Sigmoid colon (tissue), 7 donors: ENCODE measurements at regions of chr1 and their contacts with region 1.

Region 1: DNA sequence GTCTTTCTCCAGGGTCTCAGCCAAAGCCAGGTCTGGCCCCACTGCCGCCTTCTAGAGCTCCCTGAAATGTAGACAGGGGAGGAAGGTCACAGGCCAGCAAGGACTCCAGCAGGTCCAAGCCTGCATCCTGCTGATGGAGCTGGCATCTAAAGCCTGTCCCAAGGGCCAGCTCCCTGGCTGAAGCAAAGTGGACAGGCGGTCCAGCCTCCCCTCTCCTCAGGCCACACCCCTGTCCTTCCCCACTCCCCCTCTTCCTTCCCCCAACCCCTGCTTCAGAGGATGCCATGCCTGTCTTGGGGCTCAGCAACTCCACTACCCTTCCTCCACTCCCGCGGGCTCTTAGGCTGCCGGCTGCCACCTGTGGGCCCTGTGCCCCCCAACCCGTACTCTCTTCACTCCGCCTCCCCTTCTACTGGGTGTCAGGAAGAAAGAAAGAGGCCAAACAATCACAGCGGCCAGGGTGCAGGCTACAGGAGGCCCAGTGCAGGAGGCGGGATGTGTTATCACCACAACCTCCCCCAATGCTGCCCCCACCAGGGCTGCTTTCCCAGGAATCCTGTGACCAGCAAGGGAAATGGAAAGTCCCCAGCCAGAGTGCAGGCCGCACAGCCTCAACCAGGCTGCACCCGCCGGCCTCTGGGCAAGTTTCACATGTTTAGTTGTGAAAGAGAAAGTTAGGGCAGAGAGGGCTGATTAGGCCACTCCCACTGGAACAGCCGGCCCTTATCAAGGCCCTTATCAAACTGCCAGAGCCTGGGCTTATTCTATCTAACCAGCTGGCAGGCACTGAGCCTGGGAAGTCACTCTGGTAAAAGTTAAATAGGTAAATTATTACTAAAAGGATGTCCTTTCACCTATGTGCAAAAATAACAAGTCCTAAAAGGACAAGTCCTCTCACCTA is 34.1 kb downstream of the ACOT7 start:
- DNase-seq: peak; percentile 86
- H3K4me3 ChIP-seq: no peak overlapping the region
- H3K27ac ChIP-seq: peak overlapping the region; percentile 70 to 77 (median 76)
- H3K4me1 ChIP-seq: peaks cover 0 to 39% (median 32%) of the 10 kb centered on the region in 4 donors
- H3K27me3 ChIP-seq: no peaks in the 10 kb centered on the region
- CTCF ChIP-seq: no peak
- EP300 ChIP-seq: no peak
- POLR2A ChIP-seq: peak in 1 of 2 donors; percentile 16

Region 2: GRCh38 chr1:6393400-6394187 is 34.1 kb after region 1 on chr1 and contains the start of gene ACOT7:
- intact Hi-C with region 1: loop called (anchors 2 kb)
- DNase-seq: peak; percentile 92
- H3K4me3 ChIP-seq: peak within 1 kb of the TSS; percentile 47 to 67 (median 64)
- H3K27ac ChIP-seq: peak within 1 kb of the TSS; percentile 94 to 98 (median 98)
- H3K4me1 ChIP-seq: peaks cover 0 to 16% (median 15%) of the 10 kb centered on the region in 4 donors
- H3K27me3 ChIP-seq: no peaks in the 10 kb centered on the region
- CTCF ChIP-seq: peak in 2 of 4 experiments; percentile 24 to 27
- EP300 ChIP-seq: no peak
- POLR2A ChIP-seq: peak in 1 of 2 donors; percentile 22
- total RNA-seq, gene ACOT7: 17.9 to 26.5 (median 22.2) TPM

Region 3: DNA sequence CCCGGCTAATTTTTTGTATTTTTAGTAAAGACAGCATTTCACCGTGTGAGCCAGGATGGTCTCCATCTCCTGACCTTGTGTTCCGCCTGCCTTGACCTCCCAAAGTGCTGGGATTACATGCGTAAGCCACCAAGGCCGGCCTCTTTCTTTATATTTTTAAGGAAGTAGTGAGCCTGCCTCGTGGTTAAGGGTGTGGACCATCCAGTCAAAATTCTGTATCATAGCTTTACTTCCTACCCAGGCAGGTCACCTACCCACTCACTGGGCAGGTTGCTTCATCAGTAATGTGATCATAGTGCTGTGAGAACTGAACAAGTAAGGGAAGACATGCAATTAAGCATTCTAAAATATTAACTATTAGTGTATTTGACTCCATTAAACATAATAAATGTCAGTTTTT is 42.2 kb after region 1 on chr1:
- intact Hi-C with region 1: loop called (anchors 1 kb)
- DNase-seq: no peak
- H3K4me3 ChIP-seq: no peak overlapping the region
- H3K27ac ChIP-seq: no peak overlapping the region
- H3K4me1 ChIP-seq: no peaks in the 10 kb centered on the region
- H3K27me3 ChIP-seq: peaks cover 0 to 2% (median 0%) of the 10 kb centered on the region in 3 donors
- CTCF ChIP-seq: no peak
- EP300 ChIP-seq: no peak
- POLR2A ChIP-seq: no peak